Esophagus muscularis mucosa (tissue), 4 donors: ENCODE measurements at regions of chr6 and their contacts with region 1.

Region 1: DNA sequence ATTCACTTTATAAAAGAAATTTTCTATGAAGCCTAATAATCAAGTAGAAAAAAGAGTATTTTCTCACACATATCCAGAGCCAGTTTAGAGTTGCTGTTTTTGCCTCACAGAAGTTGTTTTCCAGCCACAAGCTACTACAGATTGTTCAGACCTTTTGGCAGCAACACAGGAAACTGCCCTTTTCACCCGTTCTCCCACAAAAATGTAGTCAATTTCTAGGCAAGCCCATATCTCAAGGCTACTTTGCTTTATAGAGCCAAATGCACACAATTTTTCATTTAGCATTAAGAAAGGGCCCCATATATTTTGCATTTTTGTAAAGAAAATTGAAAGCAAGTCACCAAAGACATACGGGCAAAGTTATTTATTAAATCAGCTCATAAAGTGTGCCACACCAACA is 49.5 kb downstream of the EPB41L2 start:
- DNase-seq: no peak
- H3K4me3 ChIP-seq: peak overlapping the region in 3 of 4 donors; percentile 14 to 29 (median 17)
- H3K27ac ChIP-seq: peak overlapping the region; percentile 0 to 38 (median 30)
- H3K4me1 ChIP-seq: peaks cover 28 to 50% (median 45%) of the 10 kb centered on the region in 4 donors
- H3K27me3 ChIP-seq: no peaks in the 10 kb centered on the region
- CTCF ChIP-seq: no peak
- EP300 ChIP-seq: no peak
- POLR2A ChIP-seq: no peak

Region 2: GRCh38 chr6:130969791-130970491 is 43.6 kb before region 1 on chr6:
- intact Hi-C with region 1: loop called (anchors 5 kb)
- DNase-seq: no peak
- H3K4me3 ChIP-seq: peak overlapping the region; percentile 38 to 60 (median 48)
- H3K27ac ChIP-seq: peak overlapping the region; percentile 53 to 68 (median 64)
- H3K4me1 ChIP-seq: peaks cover 23 to 51% (median 36%) of the 10 kb centered on the region in 4 donors
- H3K27me3 ChIP-seq: no peaks in the 10 kb centered on the region
- CTCF ChIP-seq: no peak
- EP300 ChIP-seq: no peak
- POLR2A ChIP-seq: no peak

Region 3: GRCh38 chr6:131054392-131055250 is 41.1 kb after region 1 on chr6:
- intact Hi-C with region 1: no loop called
- DNase-seq: no peak
- H3K4me3 ChIP-seq: no peak overlapping the region
- H3K27ac ChIP-seq: no peak overlapping the region
- H3K4me1 ChIP-seq: peaks cover 0 to 5% (median under 1%) of the 10 kb centered on the region in 4 donors
- H3K27me3 ChIP-seq: no peaks in the 10 kb centered on the region
- CTCF ChIP-seq: no peak
- EP300 ChIP-seq: no peak
- POLR2A ChIP-seq: no peak